IMR-90 (cell line): ENCODE measurements at regions of chr1 and their contacts with region 1.

Region 1: GRCh38 chr1:204565617-204566582 is 49.7 kb downstream of the MDM4 start:
- DNase-seq: peak; percentile 81
- ATAC-seq: peak; percentile 95
- H3K4me3 ChIP-seq: no peak overlapping the region
- H3K27ac ChIP-seq: no peak overlapping the region
- H3K4me1 ChIP-seq: no peaks in the 10 kb centered on the region
- H3K27me3 ChIP-seq: no peaks in the 10 kb centered on the region
- CTCF ChIP-seq: peak; percentile 80
- POLR2A ChIP-seq: no peak
- RAD21 ChIP-seq: peak; percentile 82

Region 2: DNA sequence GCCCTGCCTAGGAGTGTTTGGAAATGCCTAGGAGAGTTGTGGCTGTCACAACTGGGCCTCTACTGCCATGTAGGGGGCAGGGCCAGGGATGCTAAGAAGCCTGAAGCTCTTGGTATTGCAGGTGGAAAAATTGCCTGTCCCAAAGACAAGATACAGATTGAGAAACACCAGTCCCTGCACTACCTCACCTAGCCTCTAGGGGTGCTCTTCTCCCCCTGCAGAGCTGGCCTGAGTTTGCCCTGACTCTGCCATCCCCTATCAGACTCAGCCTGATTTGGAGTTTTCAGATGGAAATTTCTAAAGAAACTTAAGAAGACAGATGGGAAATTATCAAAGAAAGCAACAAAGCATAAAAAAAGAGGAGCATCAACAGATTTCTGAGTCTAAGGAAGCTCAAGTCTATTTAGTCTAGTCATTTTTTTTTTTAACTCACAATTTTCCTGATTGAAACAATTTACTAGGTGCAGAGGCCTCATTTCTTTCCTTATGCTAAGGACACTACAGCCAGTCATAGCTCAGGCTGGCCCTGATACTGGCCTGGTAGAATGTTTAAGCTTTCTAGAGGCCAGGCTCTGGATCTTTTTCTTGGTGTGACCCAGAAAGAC is 181.0 kb after region 1 on chr1:
- CTCF ChIA-PET with region 1: no interaction called
- POLR2A ChIA-PET with region 1: no interaction called
- dilution Hi-C with region 1: no loop called
- in situ Hi-C with region 1: no loop called
- intact Hi-C with region 1: loop called (anchors 5 kb)
- DNase-seq: peak; percentile 41
- ATAC-seq: peak; percentile 95
- H3K4me3 ChIP-seq: no peak overlapping the region
- H3K27ac ChIP-seq: no peak overlapping the region
- H3K4me1 ChIP-seq: no peaks in the 10 kb centered on the region
- H3K27me3 ChIP-seq: peaks cover 7% of the 10 kb centered on the region
- CTCF ChIP-seq: peak; percentile 66
- POLR2A ChIP-seq: no peak
- RAD21 ChIP-seq: peak; percentile 43

Region 3: GRCh38 chr1:204763706-204764427 is 198.0 kb after region 1 on chr1:
- CTCF ChIA-PET with region 1: interaction called, 12 read pairs
- POLR2A ChIA-PET with region 1: no interaction called
- dilution Hi-C with region 1: no loop called
- in situ Hi-C with region 1: no loop called
- intact Hi-C with region 1: loop called (anchors 1 kb)
- DNase-seq: peak; percentile 64
- ATAC-seq: peak; percentile 93
- H3K4me3 ChIP-seq: no peak overlapping the region
- H3K27ac ChIP-seq: no peak overlapping the region
- H3K4me1 ChIP-seq: no peaks in the 10 kb centered on the region
- H3K27me3 ChIP-seq: no peaks in the 10 kb centered on the region; the same call in 1 of the 2 replicates
- CTCF ChIP-seq: peak; percentile 69
- POLR2A ChIP-seq: no peak
- RAD21 ChIP-seq: peak; percentile 67

Region 4: DNA sequence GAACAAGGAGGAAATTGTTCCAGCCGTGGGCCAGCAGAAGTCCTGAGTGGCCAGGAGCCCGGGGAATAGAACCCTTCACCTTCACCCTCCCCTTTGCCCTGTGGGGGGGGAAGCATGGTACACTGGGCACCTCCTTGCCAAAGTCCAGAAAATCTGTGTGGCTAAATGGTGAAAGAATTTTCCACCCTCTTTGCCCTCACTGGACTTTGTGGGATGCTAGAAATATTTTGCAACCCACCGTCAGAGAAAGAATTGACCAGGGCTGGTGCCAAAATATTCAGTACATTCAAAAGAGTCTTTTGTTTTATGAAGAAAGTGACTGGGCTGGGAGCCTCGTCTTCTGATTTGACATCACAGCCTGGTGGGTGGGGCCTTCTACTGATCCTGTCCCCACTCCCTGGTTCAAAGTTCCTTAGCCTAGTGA is 319.4 kb after region 1 on chr1:
- CTCF ChIA-PET with region 1: no interaction called
- POLR2A ChIA-PET with region 1: no interaction called
- dilution Hi-C with region 1: no loop called
- in situ Hi-C with region 1: no loop called
- intact Hi-C with region 1: no loop called
- DNase-seq: no peak
- ATAC-seq: peak; percentile 51
- H3K4me3 ChIP-seq: no peak overlapping the region
- H3K27ac ChIP-seq: no peak overlapping the region
- H3K4me1 ChIP-seq: no peaks in the 10 kb centered on the region
- H3K27me3 ChIP-seq: peaks cover 12% of the 10 kb centered on the region
- CTCF ChIP-seq: no peak
- POLR2A ChIP-seq: no peak
- RAD21 ChIP-seq: no peak